ENCODE measurements at regions of chr5 and their contacts with region 1.

Region 1: DNA sequence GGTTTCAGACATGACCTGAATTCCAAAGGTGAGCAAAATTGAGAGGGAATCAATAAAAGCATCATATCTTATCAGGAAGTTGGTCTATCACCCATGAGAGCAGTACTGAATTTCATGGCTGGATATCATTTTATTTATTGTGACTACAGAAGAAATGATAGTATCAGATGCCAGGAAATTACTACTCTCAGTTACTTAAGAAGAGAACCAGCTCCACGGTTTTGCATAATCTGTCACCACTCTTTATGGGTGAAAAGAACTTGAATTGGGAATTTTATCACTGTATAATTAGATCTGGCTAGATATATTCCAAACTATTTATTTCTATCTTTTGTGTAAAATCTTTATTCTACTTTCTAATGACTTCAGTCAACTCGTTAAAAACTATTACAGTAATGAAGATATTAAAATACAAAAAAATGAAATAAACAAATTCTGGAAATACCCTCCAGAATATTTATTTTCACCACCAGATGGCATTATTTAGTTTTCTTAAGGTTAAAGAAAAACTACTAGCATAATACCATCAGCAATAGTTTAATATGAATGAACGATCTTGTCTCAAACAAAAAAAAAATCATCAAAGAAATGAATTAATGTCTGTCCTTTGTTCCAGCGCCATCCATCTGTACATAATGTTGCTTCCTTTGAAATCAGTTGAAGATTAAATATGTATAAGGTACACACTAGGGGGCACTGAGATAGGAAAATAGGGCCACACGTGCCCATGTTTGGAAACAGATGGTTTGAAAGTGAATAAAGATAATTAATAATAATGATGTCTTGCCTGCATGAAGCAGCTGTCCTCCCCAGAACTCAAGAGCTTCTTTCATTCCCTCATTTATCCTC is 84.7 kb upstream of the SLCO6A1 start:
- DNase-seq: no peak
- ATAC-seq: no peak
- H3K4me3 ChIP-seq: no peak overlapping the region
- H3K27ac ChIP-seq: no peak overlapping the region
- H3K4me1 ChIP-seq: no peaks in the 10 kb centered on the region
- H3K27me3 ChIP-seq: no peaks in the 10 kb centered on the region

Region 2: GRCh38 chr5:101153526-101153925 is 1430.0 kb before region 1 on chr5:
- intact Hi-C with region 1: no loop called
- DNase-seq: no peak
- ATAC-seq: no peak
- H3K4me3 ChIP-seq: no peak overlapping the region
- H3K27ac ChIP-seq: no peak overlapping the region
- H3K4me1 ChIP-seq: no peaks in the 10 kb centered on the region
- H3K27me3 ChIP-seq: no peaks in the 10 kb centered on the region

Region 3: GRCh38 chr5:102617191-102618187 is 34.0 kb after region 1 on chr5:
- intact Hi-C with region 1: no loop called
- DNase-seq: no peak
- ATAC-seq: no peak
- H3K4me3 ChIP-seq: no peak overlapping the region
- H3K27ac ChIP-seq: no peak overlapping the region
- H3K4me1 ChIP-seq: peaks cover 2% of the 10 kb centered on the region
- H3K27me3 ChIP-seq: no peaks in the 10 kb centered on the region

Region 4: DNA sequence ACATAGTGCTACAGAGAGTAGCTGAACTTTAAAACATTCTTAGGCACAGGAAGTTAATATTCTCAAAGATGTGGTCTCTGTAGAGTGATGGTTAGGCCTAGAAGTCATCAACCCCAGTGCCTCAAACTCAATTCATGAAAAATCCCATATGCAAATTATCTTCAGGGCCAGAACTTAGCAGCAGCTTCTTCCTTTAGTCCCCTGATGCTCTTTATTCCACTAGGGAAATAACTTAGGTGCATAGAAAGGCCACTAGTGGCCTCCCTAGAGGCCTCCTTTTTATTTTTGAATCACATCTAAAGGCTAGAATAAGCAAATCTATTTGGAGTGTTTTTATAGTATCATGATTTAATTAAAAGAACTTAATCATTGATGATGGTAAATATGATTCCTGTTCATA is 448.1 kb after region 1 on chr5:
- intact Hi-C with region 1: loop called in 1 of 4 experiments (anchors 10 kb)
- DNase-seq: no peak
- ATAC-seq: no peak
- H3K4me3 ChIP-seq: no peak overlapping the region
- H3K27ac ChIP-seq: no peak overlapping the region
- H3K4me1 ChIP-seq: no peaks in the 10 kb centered on the region
- H3K27me3 ChIP-seq: no peaks in the 10 kb centered on the region